ENCODE measurements at regions of chr17 and their contacts with region 1.

Region 1: DNA sequence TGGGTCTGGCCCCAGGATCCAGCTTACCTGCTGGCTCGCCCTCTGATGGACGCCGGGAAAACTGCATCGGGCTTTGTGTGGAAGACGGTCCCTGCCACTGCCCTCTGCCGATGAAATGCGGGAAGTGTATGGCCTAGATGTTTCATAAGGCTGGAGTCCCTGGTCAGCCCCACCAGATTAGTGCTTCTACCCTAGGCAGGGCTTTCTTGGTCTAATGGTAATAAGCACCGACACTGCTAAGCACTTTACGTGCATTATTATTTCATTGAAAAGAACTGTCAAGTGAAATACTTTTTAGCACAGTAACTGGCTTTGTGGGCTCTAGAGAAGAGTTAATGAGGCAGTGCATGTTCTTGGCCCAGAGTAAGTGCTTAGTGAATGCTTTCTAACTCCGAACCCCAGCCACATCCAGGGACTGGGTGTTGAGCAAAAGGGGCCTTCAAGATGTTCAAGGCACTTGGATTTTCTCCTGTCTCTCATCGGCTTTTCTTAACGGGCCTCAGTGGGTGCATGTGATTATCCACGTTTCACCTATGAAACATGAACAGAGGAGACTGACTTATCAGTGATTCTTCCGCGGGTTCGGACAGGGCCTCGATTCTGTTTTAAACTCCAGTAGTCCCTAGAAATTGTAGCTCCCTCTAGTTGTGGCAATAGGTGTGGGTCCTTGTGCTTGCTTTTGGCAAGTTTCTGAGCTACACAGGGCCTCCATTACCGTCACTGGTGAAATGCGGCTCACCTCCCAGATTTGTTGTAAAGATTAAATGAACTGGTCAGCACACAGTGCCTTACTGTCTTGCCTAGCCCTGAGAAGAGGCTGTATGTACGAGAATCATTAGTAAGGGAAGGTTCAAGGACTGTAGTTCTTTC is 6.6 kb downstream of the TRAF4 start:
- DNase-seq: peak; percentile 89 to 93 (median 90)
- H3K4me3 ChIP-seq: no peak overlapping the region
- H3K27ac ChIP-seq: no peak overlapping the region
- H3K4me1 ChIP-seq: peaks cover 0 to 30% (median 24%) of the 10 kb centered on the region in 4 experiments
- H3K27me3 ChIP-seq: no peaks in the 10 kb centered on the region

Region 2: DNA sequence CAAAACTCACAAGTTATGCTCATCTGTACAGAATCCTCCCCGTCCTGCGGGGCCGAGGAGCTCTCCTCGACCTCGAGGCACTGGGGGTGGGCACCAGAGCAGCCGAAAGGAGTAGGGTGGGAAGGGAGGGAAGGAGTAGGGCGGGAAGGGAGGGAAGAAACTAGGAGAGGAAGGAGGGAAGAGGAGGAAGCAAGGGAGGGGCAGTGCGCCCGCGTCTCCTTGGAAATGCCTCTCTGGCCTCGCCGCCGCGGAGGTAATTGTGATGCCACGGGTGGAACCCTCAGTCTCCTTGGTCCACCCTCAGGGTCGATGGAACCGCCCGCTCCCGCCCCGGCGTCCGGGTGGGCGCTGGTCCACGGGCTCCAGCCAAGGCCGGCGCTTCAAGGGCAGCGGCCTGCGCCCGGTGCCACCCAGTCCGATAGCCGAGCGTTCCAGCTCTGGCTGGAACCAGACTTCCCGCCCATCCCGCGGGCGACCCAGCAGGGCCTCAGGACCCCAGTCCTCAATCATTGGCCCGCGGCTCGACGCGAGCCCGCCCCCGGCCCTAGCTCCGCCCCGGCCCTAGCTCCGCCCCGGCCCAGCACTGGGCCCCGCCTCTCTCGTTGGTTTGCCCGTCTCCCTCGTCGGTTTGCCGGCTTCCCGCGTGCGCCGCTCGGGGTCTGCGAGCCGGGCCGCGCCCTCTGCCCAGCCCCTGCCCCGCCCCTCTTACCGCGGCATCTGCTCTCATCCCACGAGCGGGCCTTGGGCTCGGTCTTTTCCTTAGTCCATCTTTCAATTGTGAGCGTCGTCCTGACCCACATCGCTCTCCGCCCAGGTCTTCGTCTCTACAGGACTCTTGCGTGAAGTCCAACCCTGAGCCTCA is 39.3 kb before region 1 on chr17:
- CTCF ChIA-PET with region 1: interaction called, 12 read pairs
- POLR2A ChIA-PET with region 1: no interaction called
- DNase-seq: peak; percentile 77 to 90 (median 87)
- H3K4me3 ChIP-seq: peak overlapping the region; percentile 51 to 83 (median 72)
- H3K27ac ChIP-seq: peak overlapping the region in 1 of 2 experiments; percentile 85
- H3K4me1 ChIP-seq: peaks cover 0 to 29% (median 23%) of the 10 kb centered on the region in 4 experiments
- H3K27me3 ChIP-seq: no peaks in the 10 kb centered on the region

Region 3: DNA sequence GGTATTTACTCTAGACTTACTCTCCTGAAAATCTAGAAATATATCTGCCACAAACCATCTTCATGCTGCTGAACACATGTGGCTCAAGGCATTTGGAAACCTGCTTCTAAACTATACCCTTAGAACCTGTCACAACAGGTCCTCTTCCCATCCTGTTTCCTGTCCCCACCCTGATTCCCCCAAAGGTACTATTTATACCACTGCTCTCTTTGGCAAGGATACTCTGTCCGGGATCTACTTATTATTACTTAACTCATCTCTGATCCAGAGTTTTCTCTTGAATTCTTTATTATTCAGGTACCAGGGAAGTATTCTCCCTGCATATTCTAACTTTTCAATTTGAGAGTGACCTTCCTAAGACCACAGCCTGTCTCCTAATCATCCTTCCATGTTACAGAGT is 26.8 kb after region 1 on chr17:
- CTCF ChIA-PET with region 1: interaction called, 14 read pairs
- POLR2A ChIA-PET with region 1: no interaction called
- DNase-seq: no peak
- H3K4me3 ChIP-seq: no peak overlapping the region
- H3K27ac ChIP-seq: peak overlapping the region in 1 of 2 experiments; percentile 9
- H3K4me1 ChIP-seq: peaks cover 0 to 20% (median 9%) of the 10 kb centered on the region in 4 experiments
- H3K27me3 ChIP-seq: no peaks in the 10 kb centered on the region